Right cardiac atrium (tissue), 5 donors: ENCODE measurements at regions of chr16 and their contacts with region 1.

Region 1: DNA sequence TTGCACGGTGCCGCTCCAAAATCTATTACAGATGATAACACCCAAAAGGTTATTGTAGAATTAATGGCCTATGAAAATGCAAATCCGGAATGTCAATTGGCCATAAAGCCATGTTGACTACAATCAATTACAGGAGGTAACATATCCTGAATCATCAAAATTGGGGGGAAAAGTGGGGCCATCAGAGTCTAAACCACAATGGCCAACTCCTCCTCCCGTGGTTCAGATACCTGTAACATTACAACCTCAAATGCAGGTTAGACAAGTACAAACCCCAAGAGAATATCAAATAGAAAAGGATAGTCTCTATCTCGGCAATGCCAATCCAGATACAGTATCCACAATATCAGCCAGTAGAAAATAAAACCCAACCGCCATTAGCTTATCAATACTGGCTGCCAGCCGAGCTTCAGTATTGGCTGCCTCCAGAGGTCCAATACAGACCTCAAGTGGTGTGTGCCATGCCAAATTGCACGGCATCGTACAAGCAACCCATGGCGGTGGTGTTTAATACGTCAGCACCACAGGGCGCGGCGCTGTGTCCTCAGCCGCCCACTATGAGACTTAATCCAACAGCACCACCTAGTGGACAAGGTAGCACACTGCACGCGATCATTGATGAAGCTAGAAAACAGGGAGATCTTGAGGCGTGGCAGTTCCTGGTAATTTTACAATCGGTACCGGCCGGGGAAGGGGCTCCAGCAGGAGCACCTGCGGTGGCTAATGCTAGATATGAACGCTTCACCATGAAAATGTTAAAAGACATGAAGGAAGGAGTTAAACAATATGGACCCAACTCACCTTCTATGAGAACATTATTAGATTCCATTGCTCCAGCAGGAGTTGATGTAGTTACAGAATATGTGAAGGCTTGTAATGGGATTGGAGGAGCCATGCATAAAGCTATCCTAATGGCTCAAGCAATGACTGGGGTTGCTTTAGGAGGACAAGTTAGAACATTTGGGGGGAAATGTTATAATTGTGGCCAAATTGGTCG is 15.2 kb downstream of the FLYWCH1 start:
- DNase-seq: peak; percentile 91 to 96 (median 91)
- ATAC-seq: peak; percentile 85 to 89
- H3K4me3 ChIP-seq: no peak overlapping the region
- H3K27ac ChIP-seq: no peak overlapping the region
- H3K4me1 ChIP-seq: no peaks in the 10 kb centered on the region
- H3K27me3 ChIP-seq: no peaks in the 10 kb centered on the region

Region 2: DNA sequence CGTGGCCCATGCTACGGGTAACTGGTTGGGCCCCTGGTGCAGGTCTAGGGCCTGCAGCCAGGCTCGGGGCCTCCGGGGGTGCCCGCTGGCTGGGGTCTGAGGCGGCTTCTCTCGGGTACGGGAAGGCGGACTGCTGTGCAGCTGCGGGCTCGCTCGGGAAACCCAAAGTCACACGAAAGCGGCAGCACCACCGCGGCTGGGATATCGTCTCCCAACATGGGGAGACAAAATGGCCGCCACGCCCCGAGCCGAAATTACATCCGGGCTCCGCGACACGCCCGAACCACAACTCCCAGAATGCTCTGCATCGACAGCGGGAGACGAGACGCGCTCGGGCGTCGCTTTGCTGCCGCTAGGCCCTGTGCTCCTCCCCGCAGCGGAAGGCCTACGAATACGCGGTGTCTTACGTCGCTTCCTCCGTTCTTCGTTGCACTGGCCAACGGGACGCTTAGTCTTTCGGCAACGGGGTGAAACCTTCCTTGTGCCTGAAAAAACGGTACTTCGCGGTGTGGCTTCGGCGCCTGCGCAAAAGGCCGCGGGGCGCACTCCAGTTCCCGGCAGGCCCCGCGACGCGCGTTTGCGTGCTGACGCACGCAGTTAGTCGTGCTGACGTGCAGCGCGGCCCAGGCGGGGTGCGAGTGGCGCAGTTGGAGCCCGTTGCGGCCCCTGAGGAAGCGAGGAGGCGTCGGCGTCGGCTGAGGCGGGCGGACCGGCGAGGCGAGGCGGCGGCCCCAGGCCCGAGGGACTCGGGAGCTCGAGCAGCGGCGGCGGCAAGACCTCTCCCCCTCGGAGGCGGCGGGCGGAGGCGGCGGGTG is 174.7 kb before region 1 on chr16 and contains the start of gene SRRM2:
- intact Hi-C with region 1: no loop called
- DNase-seq: peak; percentile 96 to 98 (median 98)
- ATAC-seq: peak; percentile 94 to 96
- H3K4me3 ChIP-seq: peak within 1 kb of the TSS; percentile 90
- H3K27ac ChIP-seq: peak within 1 kb of the TSS; percentile 98
- H3K4me1 ChIP-seq: peaks cover 17% of the 10 kb centered on the region
- H3K27me3 ChIP-seq: no peaks in the 10 kb centered on the region
- total RNA-seq, gene SRRM2: 299 to 352 (median 320) TPM

Region 3: GRCh38 chr16:2838928-2839327 is 88.0 kb before region 1 on chr16:
- intact Hi-C with region 1: loop called in 1 of 4 experiments (anchors 5 kb)
- DNase-seq: peak; percentile 60 to 82 (median 78)
- ATAC-seq: peak; percentile 66 to 75
- H3K4me3 ChIP-seq: no peak overlapping the region
- H3K27ac ChIP-seq: no peak overlapping the region
- H3K4me1 ChIP-seq: no peaks in the 10 kb centered on the region
- H3K27me3 ChIP-seq: no peaks in the 10 kb centered on the region

Region 4: DNA sequence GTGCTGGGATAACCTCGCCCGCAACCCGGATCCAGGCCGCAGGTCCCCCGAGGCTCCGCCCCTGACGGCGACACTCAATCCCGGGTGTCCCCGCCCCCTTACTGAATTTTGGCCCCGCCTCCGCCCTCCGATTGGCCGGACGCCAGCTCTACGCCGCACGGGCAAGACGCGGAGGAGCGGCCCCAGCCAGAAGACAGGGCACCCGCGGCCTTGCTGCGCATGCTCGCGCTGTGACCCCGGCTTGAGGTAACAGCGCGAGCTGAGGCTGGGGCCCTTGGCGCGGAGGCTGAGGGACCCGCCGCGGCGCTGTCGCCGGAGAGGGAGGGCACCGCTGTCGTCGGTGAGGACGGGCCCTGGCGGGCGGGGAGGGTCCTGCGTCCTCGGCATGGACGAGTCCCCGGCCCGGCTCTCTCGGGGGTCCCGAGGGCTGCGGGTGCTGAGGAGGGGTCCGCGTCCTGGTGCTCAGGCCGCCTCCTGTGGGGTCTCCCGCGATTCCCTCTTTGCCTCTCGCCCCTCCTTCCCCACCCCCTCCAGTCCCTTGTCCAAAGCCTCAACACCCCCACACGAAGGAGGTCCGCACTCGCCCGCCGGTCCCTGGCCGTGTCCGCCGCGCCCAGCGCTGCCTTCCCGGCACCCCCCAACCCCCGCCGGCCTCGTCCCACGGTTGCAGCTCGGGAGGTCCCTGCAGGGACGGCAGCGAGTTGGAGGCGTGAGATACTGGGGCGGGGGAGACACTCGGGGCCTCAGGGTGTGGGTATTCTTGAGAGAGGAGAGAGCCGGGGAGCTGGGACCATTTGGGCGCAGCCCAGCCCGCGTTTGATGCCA is 43.7 kb before region 1 on chr16 and contains the start of gene FLYWCH2:
- intact Hi-C with region 1: no loop called
- DNase-seq: peak; percentile 97 to 100 (median 99)
- ATAC-seq: peak; percentile 91 to 92
- H3K4me3 ChIP-seq: peak within 1 kb of the TSS; percentile 62
- H3K27ac ChIP-seq: peak within 1 kb of the TSS; percentile 87
- H3K4me1 ChIP-seq: peaks cover 2% of the 10 kb centered on the region
- H3K27me3 ChIP-seq: no peaks in the 10 kb centered on the region
- total RNA-seq, gene FLYWCH2: 26.6 to 37.2 (median 29.1) TPM

Region 5: GRCh38 chr16:3134564-3135417 is 207.8 kb after region 1 on chr16 and contains the start of gene ZNF213:
- intact Hi-C with region 1: no loop called
- DNase-seq: peak; percentile 97 to 98 (median 97)
- ATAC-seq: peak; percentile 96 to 97
- H3K4me3 ChIP-seq: peak within 1 kb of the TSS; percentile 91
- H3K27ac ChIP-seq: peak within 1 kb of the TSS; percentile 92
- H3K4me1 ChIP-seq: peaks cover 3% of the 10 kb centered on the region
- H3K27me3 ChIP-seq: no peaks in the 10 kb centered on the region
- total RNA-seq, gene ZNF213: 6.2 to 8.7 (median 7.6) TPM